CD14-positive monocyte (primary cell): ENCODE measurements at regions of chr14 and their contacts with region 1.

Region 1: GRCh38 chr14:93184388-93185353 is at the starts of genes LYSET and MOAP1:
- DNase-seq: peak; percentile 83 to 92 (median 87)
- H3K4me3 ChIP-seq: peak within 1 kb of the TSS; percentile 82 to 97 (median 86)
- H3K4me3 Mint-ChIP-seq: peak within 1 kb of the TSS; percentile 87 to 91
- H3K27ac ChIP-seq: peak within 1 kb of the TSS; percentile 84 to 100
- H3K27ac Mint-ChIP-seq: peak within 1 kb of the TSS; percentile 94 to 98 (median 96)
- H3K4me1 ChIP-seq: peaks cover 26 to 30% of the 10 kb centered on the region in 2 donors
- H3K4me1 Mint-ChIP-seq: peaks cover 31% of the 10 kb centered on the region
- H3K27me3 ChIP-seq: no peaks in the 10 kb centered on the region
- H3K27me3 Mint-ChIP-seq: no peaks in the 10 kb centered on the region
- CTCF ChIP-seq: peak; percentile 12
- polyA plus RNA-seq, gene LYSET: 10.8 to 43.3 (median 36.9) TPM
- polyA plus RNA-seq, gene MOAP1: 22.5 to 53.9 (median 22.6) TPM

Region 2: GRCh38 chr14:93206793-93207467 is 22.3 kb after region 1 on chr14 and contains the starts of genes GON7 and UBR7:
- intact Hi-C with region 1: loop called in 1 of 2 experiments (anchors 2 kb)
- DNase-seq: peak; percentile 93 to 96 (median 94)
- H3K4me3 ChIP-seq: peak within 1 kb of the TSS; percentile 58 to 90 (median 76)
- H3K4me3 Mint-ChIP-seq: peak within 1 kb of the TSS; percentile 93 to 97
- H3K27ac ChIP-seq: peak within 1 kb of the TSS; percentile 67 to 87
- H3K27ac Mint-ChIP-seq: peak within 1 kb of the TSS; percentile 91 to 97 (median 97)
- H3K4me1 ChIP-seq: peaks cover 24 to 32% of the 10 kb centered on the region in 2 donors
- H3K4me1 Mint-ChIP-seq: peaks cover 37% of the 10 kb centered on the region
- H3K27me3 ChIP-seq: no peaks in the 10 kb centered on the region
- H3K27me3 Mint-ChIP-seq: peaks cover 0 to 3% (median 1%) of the 10 kb centered on the region in 3 donors
- CTCF ChIP-seq: peak; percentile 46
- polyA plus RNA-seq, gene GON7: 4.8 to 24.0 (median 22.7) TPM
- polyA plus RNA-seq, gene UBR7: 8.2 to 16.7 (median 14.0) TPM